Calu3 (cell line): ENCODE measurements at regions of chr18 and their contacts with region 1.

Region 1: DNA sequence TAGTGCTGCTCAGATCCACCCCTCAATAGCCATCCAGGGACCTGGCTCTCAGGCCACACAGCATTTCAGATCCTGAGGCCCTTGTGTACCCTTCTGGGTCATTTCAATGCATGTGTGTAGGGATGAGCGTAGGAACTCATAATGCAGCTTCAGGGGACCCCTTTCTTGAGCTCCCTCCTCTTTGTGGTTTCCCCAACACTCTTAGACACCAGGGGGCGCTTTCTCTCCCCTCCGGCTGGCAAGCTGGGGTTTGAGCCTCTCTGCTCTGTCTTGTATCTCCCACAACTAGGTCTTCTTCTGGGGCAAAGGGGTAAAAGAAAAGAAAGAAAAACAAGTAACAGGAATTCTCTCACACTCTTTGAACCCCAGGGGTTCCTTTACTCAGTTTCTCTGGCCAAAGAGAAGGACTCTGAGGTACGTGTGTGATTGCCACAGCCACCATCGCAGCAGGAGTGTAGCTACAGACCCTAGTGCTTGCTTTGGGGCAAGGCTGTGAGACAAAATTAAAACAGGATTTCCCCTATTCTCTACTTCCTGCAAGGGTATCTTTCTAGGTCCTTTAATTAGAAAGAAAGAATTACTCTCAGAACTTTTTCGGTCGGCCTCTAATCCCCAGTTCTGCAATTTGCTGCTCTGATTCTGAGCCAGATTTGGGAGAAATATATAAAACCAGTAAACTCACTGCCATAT is 38.0 kb downstream of the CABYR start:
- DNase-seq: peak; percentile 81
- H3K4me3 Mint-ChIP-seq: no peak overlapping the region
- H3K27ac Mint-ChIP-seq: no peak overlapping the region
- H3K4me1 Mint-ChIP-seq: peaks cover 6% of the 10 kb centered on the region
- H3K27me3 Mint-ChIP-seq: no peaks in the 10 kb centered on the region
- CTCF ChIP-seq: peak; percentile 90

Region 2: GRCh38 chr18:24219561-24220317 is 42.9 kb after region 1 on chr18:
- CTCF ChIA-PET with region 1: interaction called, 6 read pairs
- intact Hi-C with region 1: loop called (anchors 5 kb)
- DNase-seq: no peak
- H3K4me3 Mint-ChIP-seq: no peak overlapping the region
- H3K27ac Mint-ChIP-seq: no peak overlapping the region
- H3K4me1 Mint-ChIP-seq: peaks cover 41% of the 10 kb centered on the region
- H3K27me3 Mint-ChIP-seq: no peaks in the 10 kb centered on the region
- CTCF ChIP-seq: no peak

Region 3: GRCh38 chr18:24271381-24272331 is 94.8 kb after region 1 on chr18:
- CTCF ChIA-PET with region 1: interaction called, 17 read pairs
- intact Hi-C with region 1: loop called (anchors 1 kb)
- DNase-seq: peak; percentile 77
- H3K4me3 Mint-ChIP-seq: peak overlapping the region; percentile 98
- H3K27ac Mint-ChIP-seq: peak overlapping the region; percentile 61
- H3K4me1 Mint-ChIP-seq: peaks cover 41% of the 10 kb centered on the region
- H3K27me3 Mint-ChIP-seq: no peaks in the 10 kb centered on the region
- CTCF ChIP-seq: no peak

Region 4: GRCh38 chr18:24315170-24315569 is 138.3 kb after region 1 on chr18:
- CTCF ChIA-PET with region 1: no interaction called
- intact Hi-C with region 1: loop called (anchors 10 kb)
- DNase-seq: no peak
- H3K4me3 Mint-ChIP-seq: no peak overlapping the region
- H3K27ac Mint-ChIP-seq: no peak overlapping the region
- H3K4me1 Mint-ChIP-seq: no peaks in the 10 kb centered on the region
- H3K27me3 Mint-ChIP-seq: no peaks in the 10 kb centered on the region
- CTCF ChIP-seq: no peak

Region 5: GRCh38 chr18:24362758-24363157 is 185.9 kb after region 1 on chr18:
- CTCF ChIA-PET with region 1: interaction called, 14 read pairs
- intact Hi-C with region 1: no loop called
- DNase-seq: peak; percentile 45
- H3K4me3 Mint-ChIP-seq: no peak overlapping the region
- H3K27ac Mint-ChIP-seq: no peak overlapping the region
- H3K4me1 Mint-ChIP-seq: peaks cover 6% of the 10 kb centered on the region
- H3K27me3 Mint-ChIP-seq: no peaks in the 10 kb centered on the region
- CTCF ChIP-seq: no peak

Region 6: DNA sequence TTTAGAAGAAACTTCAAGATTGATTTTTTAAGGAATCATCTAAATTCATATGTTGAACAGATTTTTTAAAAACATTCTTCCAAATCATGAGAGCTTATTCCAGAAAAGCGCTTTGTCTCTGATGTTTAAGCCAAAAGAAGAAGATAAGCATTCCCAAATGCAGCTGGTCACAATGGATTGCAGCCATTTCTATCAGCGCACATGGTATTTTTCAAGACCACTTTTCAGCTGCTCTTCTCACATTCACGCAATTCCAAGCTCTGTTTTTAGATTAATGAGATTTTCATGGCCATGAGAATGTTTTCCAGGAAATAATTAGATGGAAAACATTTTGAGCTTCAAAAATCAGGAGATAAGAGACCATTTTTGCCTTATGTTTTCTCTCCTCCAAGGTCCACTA is 212.1 kb after region 1 on chr18:
- CTCF ChIA-PET with region 1: no interaction called
- intact Hi-C with region 1: no loop called
- DNase-seq: no peak
- H3K4me3 Mint-ChIP-seq: no peak overlapping the region
- H3K27ac Mint-ChIP-seq: no peak overlapping the region
- H3K4me1 Mint-ChIP-seq: no peaks in the 10 kb centered on the region
- H3K27me3 Mint-ChIP-seq: no peaks in the 10 kb centered on the region
- CTCF ChIP-seq: no peak